Activated naive CD4-positive, alpha-beta T cell treated with anti-CD3 and anti-CD28 coated beads for 36 hours (primary cell): ENCODE measurements at regions of chr2 and their contacts with region 1.

Region 1: DNA sequence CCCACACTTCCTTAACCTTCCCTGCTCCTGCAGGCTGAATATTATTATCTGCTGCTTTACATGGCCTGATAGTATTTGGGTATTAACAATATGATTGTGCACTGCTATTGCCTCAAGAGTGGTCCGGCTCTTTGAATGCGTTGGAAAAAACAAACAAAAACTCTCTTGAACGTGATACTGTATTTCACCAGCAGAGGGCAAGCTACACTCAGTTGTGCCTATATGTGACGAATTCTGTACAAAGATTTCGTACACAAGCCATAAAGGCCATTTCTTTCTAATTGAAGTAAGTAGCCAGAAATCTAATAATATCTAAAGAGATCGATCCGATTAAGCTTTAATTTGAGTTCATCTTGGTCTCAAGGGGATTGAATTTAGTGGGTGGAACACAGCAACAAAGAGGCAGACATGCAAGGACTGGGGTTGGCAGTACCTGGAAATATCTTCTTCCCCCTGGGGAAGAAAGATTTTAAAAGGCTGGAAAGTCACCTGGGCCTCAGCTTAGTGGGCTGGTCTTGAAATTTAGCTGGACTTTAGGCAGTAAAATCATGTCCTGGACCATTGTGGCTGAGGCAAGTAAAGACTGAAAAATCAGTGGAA is 49.3 kb upstream of the RAB6D start:
- DNase-seq: peak; percentile 49
- H3K4me3 Mint-ChIP-seq: no peak overlapping the region
- H3K27ac Mint-ChIP-seq: no peak overlapping the region
- H3K4me1 Mint-ChIP-seq: no peaks in the 10 kb centered on the region
- H3K27me3 Mint-ChIP-seq: peaks cover 23% of the 10 kb centered on the region

Region 2: DNA sequence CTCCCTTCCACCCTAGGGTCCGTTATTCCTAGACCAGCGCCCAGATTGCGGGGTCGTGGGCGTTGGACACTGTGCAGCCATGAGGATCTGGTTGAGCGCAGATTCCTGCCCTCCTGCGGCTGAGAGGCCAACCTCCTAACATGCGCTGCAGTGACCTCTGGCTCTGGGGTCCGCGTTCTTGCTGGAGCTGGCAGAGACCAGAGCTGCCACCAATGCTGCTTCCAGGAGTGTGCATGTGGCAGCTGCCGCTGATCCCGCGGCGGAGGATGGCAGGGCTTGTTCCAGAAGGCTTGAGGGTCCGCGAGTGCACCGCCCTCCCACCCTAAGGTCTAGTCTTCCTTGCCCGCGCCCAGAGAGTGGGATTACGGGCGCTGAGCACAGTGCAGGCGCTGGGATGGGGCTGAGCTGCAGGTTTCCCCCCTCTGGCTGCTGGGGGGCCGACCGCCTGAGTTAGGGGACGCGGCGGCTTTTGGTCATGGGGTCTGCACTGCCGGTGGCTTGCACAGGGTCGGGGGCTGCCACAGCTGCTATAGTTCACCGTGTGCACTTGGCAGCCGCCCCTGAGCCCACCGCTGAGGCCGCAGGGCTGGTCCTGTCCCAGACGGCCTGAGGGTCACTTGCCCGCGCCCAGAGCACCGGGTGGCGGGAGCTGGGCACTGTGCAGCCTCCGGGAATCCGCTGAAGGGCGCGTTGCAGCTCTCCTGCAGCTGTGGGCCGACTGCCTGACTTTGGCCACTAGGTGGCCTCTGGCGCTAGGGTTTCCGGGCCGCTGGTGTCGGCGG is 260.3 kb after region 1 on chr2:
- CTCF ChIA-PET with region 1: interaction called, 22 read pairs
- intact Hi-C with region 1: loop called (anchors 1 kb)
- DNase-seq: peak; percentile 77
- H3K4me3 Mint-ChIP-seq: peak overlapping the region; percentile 24
- H3K27ac Mint-ChIP-seq: no peak overlapping the region
- H3K4me1 Mint-ChIP-seq: peaks cover 3% of the 10 kb centered on the region
- H3K27me3 Mint-ChIP-seq: peaks cover 13% of the 10 kb centered on the region